ENCODE measurements at regions of chr1 and their contacts with region 1.

Region 1: GRCh38 chr1:149962123-149962548 is 25.5 kb upstream of the MTMR11 start:
- DNase-seq: peak; percentile 80

Region 2: DNA sequence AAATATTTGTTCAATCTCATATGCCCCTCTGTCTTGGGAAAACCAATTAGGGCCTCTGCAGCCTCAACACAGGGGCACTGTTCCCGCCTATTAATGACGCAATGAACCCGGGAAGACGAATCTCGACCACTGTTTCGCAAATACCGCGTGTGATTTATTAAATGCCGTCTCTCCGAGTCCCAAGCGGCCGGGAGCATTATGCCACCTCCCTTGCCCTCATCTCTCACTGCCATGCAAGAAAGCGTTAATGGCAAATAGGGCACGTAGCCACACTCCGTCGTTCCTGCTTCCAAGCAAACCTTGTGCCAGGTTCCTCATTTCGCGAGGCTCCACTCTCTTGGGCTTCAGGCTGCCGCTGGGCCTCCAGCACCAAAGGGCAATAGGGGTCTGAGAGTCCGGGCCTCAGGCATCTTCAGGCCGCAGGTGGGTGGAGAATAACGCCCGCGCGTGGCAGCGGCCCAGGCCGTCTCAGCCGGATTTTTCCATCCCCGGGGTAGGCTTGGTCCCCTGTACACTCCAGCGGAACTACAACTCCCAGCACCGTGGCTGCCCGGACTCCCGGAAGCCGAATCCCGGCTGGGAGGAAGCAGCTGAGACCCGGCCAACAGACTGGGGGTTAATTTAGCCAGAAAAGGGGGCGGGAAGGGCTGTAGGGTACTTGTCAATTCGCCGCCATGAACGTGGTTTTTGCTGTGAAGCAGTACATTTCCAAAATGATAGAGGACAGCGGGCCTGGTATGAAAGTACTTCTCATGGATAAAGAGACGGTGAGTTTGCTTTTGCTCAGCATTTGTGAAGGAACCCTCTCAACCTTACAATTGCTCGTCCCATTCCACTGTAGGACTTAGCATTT is 105.3 kb after region 1 on chr1 and contains the start of gene VPS45:
- in situ Hi-C with region 1: loop called (anchors 10 kb)
- DNase-seq: peak; percentile 92

Region 3: DNA sequence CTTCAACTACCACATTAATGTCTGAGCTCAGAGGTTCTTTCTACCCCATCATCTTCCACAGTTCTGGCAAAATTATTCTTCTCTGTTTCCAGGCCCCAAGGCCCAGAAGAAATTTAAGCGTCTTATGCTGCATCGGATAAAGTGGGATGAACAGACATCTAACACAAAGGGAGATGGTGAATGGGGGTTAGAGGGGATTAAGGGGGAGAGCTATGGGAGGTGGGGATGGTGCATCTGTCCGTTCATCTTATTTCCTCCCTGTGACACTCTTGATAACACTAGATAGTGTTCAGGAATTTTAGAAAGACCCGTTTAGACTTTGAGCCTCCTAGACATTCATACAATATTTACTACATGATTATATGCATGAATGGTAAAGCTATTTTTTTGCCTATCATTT is 384.2 kb after region 1 on chr1:
- in situ Hi-C with region 1: no loop called
- DNase-seq: no peak